ENCODE measurements at regions of chr9 and their contacts with region 1.

Region 1: GRCh38 chr9:126690431-126691350 is 77.0 kb downstream of the LMX1B start:
- DNase-seq: peak; percentile 58 to 60 (median 60)
- ATAC-seq: peak; percentile 39 to 84 (median 66)
- H3K4me3 ChIP-seq: no peak overlapping the region
- H3K27ac ChIP-seq: no peak overlapping the region
- H3K4me1 ChIP-seq: no peaks in the 10 kb centered on the region
- H3K27me3 ChIP-seq: no peaks in the 10 kb centered on the region
- CTCF ChIP-seq: peak; percentile 44 to 71 (median 64)
- POLR2A ChIP-seq: no peak

Region 2: GRCh38 chr9:126611592-126612325 is 78.9 kb before region 1 on chr9:
- intact Hi-C with region 1: loop called in 1 of 2 experiments (anchors 5 kb)
- DNase-seq: peak; percentile 73 to 81 (median 78)
- ATAC-seq: peak; percentile 88 to 93 (median 92)
- H3K4me3 ChIP-seq: no peak overlapping the region
- H3K27ac ChIP-seq: no peak overlapping the region
- H3K4me1 ChIP-seq: peaks cover 0 to 18% (median 3%) of the 10 kb centered on the region in 4 donors
- H3K27me3 ChIP-seq: peaks cover 0 to 52% of the 10 kb centered on the region in 2 donors
- CTCF ChIP-seq: peak; percentile 70 to 91 (median 86)
- POLR2A ChIP-seq: no peak

Region 3: GRCh38 chr9:126763130-126763764 is 72.6 kb after region 1 on chr9:
- intact Hi-C with region 1: no loop called
- DNase-seq: no peak
- ATAC-seq: no peak
- H3K4me3 ChIP-seq: no peak overlapping the region
- H3K27ac ChIP-seq: no peak overlapping the region
- H3K4me1 ChIP-seq: no peaks in the 10 kb centered on the region
- H3K27me3 ChIP-seq: no peaks in the 10 kb centered on the region
- CTCF ChIP-seq: no peak
- POLR2A ChIP-seq: no peak

Region 4: GRCh38 chr9:126914458-126915280 is 224.0 kb after region 1 on chr9 and contains the start of gene RALGPS1:
- intact Hi-C with region 1: no loop called
- DNase-seq: peak; percentile 96 to 97 (median 96)
- ATAC-seq: peak; percentile 98 to 100 (median 99)
- H3K4me3 ChIP-seq: peak within 1 kb of the TSS; percentile 36 to 78 (median 47)
- H3K27ac ChIP-seq: no peak within 1 kb of the TSS
- H3K4me1 ChIP-seq: no peaks in the 10 kb centered on the region
- H3K27me3 ChIP-seq: no peaks in the 10 kb centered on the region
- CTCF ChIP-seq: no peak
- POLR2A ChIP-seq: peak; percentile 24
- total RNA-seq, gene RALGPS1: 1.2 to 3.8 (median 2.4) TPM

Measured in right lobe of liver (tissue), 6 donors.